ENCODE measurements at regions of chr19 and their contacts with region 1.

Region 1: GRCh38 chr19:8005534-8006256 is at the start of gene ELAVL1:
- DNase-seq: peak; percentile 95
- ATAC-seq: peak; percentile 93
- H3K4me3 Mint-ChIP-seq: peak within 1 kb of the TSS; percentile 95
- H3K27ac Mint-ChIP-seq: peak within 1 kb of the TSS; percentile 94
- H3K4me1 Mint-ChIP-seq: peaks cover 36% of the 10 kb centered on the region
- H3K27me3 Mint-ChIP-seq: no peaks in the 10 kb centered on the region
- total RNA-seq, gene ELAVL1: 149 to 184 TPM

Region 2: GRCh38 chr19:7970716-7971448 is 34.8 kb before region 1 on chr19:
- CTCF ChIA-PET with region 1: interaction called, 7 read pairs
- POLR2A ChIA-PET with region 1: no interaction called
- intact Hi-C with region 1: loop called in 1 of 2 experiments (anchors 2 kb)
- DNase-seq: peak; percentile 56
- ATAC-seq: peak; percentile 65
- H3K4me3 Mint-ChIP-seq: no peak overlapping the region
- H3K27ac Mint-ChIP-seq: no peak overlapping the region
- H3K4me1 Mint-ChIP-seq: no peaks in the 10 kb centered on the region
- H3K27me3 Mint-ChIP-seq: no peaks in the 10 kb centered on the region

Region 3: DNA sequence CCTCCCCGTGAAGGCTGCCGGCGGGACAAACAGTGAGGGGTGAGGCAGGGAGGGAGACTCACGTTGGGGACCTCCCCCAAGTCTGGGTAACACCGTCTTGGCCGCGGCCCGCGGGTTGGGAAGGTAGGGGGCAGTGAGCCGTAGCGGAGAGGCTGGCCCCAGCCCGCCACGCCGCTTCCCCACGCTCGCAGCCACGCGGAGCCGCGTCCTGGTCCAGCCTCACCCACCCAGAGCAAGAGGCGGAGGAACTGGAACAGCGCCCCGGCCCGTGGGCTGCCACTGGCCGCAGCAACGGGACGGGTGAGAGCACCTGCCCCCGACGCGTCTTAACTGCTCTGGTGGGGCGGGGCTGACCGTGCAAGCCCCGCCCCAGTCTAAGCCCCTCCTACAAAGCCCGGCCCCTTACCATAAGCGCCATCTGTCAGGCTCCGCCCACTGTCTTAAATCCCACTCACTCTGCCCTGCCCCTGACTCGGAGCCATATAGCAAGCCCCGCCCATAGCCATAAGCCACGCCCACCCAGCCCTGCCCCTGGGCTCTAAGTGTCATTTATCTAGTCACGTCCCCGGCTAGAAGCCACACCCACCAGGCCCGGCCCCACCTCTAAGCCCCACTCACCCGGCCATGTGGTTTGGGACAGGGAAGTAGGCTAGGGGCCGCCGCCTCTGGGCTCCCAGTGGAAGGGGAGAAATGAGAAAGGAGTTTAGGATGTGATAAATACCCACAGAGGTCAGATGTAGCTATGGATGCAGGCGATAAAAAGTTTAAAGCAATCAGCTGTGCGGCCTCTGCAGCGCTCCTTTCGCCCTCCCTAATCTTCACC is 44.8 kb after region 1 on chr19:
- CTCF ChIA-PET with region 1: no interaction called
- POLR2A ChIA-PET with region 1: interaction called, 5 read pairs
- intact Hi-C with region 1: loop called in 1 of 2 experiments (anchors 1 kb)
- DNase-seq: peak; percentile 98
- ATAC-seq: peak; percentile 99
- H3K4me3 Mint-ChIP-seq: peak overlapping the region; percentile 36
- H3K27ac Mint-ChIP-seq: no peak overlapping the region
- H3K4me1 Mint-ChIP-seq: peaks cover 11% of the 10 kb centered on the region
- H3K27me3 Mint-ChIP-seq: peaks cover 4% of the 10 kb centered on the region

Region 4: DNA sequence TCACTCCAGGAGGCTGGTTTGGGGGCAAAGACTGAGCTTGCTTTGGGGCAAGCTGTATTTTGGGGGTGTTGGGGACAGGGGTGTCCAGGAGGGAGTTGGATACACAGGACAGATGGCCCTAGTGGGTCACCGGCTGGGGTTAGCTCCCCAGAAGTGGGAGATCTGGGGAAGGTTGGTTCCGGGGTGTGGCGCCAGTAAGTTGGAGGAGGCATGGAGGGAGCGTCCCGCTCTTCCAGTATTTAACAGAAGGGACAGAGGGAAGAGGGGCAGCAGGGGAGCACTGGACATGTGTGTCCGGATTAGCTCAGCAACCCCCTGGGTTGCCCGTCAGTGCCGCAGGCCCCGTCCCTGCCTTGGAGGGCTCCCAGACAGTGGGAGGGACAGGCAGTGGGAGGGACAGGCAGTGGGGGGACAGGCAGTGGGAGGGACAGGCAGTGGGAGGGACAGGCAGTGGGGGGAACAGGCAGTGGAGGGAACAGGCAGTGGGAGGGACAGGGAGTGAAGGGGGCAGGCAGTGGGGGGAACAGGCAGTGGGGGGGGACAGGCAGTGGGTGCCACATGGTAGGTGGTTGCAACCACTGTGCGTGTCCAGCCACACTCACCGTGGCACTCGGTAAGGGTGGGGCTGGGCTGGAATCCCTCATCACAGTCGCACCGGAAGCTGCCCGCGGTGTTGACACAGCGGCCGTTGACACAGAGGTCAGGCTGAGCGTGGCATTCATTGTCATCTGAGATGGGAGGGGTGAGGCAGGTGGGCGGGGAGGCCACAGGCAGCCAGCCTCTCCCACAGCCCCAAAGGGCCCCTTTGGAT is 80.1 kb after region 1 on chr19:
- CTCF ChIA-PET with region 1: no interaction called
- POLR2A ChIA-PET with region 1: no interaction called
- intact Hi-C with region 1: no loop called
- DNase-seq: no peak
- ATAC-seq: no peak
- H3K4me3 Mint-ChIP-seq: no peak overlapping the region
- H3K27ac Mint-ChIP-seq: no peak overlapping the region
- H3K4me1 Mint-ChIP-seq: no peaks in the 10 kb centered on the region
- H3K27me3 Mint-ChIP-seq: peaks cover 3% of the 10 kb centered on the region

Measured in activated CD4-positive, alpha-beta T cell treated with anti-CD3 and anti-CD28 coated beads for 36 hours (primary cell).